Calu3 (cell line): ENCODE measurements at regions of chr1 and their contacts with region 1.

Region 1: DNA sequence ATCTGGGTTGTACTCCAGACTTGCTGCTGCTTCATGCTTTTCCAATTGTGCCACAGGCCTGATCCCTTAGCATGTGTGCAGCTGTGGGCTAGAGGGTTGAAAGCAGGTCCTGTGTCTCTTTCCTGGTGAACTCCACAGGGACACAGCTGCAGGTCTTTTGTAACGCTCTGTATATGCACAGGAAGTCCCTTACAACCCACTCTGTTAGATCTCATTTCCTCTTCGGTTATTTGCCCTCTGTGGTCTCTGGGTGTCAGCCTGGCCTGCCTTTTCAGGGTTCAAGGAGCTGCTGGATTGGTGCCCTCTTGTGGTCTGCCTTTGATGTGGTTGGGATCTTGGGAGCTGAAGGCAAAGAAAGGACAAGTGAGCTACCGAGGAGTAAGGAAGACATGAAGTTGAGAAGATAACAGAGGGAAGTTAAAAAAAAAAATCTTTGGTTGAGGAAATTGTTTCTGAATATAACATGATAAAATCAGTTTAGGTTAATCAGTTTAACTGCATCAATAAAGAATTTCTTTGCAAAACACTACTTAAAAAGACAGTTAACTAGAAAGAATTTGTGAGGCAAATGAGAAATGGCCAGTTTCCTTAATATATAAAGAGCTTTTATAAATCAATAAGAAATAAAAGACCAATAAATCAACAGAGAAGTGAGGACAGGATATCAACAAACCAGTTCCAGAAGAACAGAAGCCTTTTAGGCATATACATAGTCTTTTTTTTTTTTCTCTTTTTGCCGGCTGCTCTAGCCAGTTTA is 44.1 kb downstream of the UCK2 start:
- DNase-seq: peak; percentile 67
- H3K4me3 Mint-ChIP-seq: peak overlapping the region; percentile 7
- H3K27ac Mint-ChIP-seq: peak overlapping the region; percentile 27
- H3K4me1 Mint-ChIP-seq: peaks cover 71% of the 10 kb centered on the region
- H3K27me3 Mint-ChIP-seq: no peaks in the 10 kb centered on the region
- CTCF ChIP-seq: peak; percentile 21

Region 2: DNA sequence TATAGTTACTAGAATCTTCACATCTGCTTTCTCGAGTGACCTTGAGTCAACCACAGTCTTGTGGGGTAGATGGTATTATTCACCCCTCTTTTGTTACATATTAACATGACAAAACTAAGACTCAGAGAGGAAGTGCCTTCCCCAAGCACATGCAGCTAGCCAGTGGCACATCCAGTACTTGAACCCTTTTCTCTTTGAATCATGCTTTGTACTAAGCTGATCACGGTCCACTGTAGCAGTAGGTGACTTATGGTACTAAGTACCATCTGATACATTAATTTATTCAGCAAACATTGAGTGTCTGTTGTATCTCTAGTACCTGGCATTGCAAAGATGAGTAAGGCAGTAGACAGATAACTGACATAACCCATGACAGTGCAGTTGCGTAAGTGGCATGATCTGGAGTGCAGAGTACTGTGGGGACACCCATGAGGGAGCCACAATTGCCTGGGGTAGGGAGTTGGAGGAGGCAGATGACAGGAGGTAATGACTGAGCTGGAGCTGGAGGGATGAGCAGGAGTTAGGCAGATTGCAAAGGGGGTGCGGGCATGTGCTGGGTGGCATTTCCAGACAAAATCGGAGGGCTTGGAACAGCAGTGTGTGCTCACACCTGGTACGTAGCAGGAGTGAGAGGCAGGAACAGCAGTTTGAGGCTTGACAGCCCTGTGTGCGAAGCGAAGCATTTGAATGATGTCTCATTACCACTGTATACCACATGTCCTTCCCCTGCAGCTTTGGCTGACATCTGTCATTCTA is 14.3 kb before region 1 on chr1:
- CTCF ChIA-PET with region 1: interaction called, 4 read pairs
- intact Hi-C with region 1: loop called (anchors 2 kb)
- DNase-seq: no peak
- H3K4me3 Mint-ChIP-seq: peak overlapping the region; percentile 21
- H3K27ac Mint-ChIP-seq: peak overlapping the region; percentile 62
- H3K4me1 Mint-ChIP-seq: peaks cover 80% of the 10 kb centered on the region
- H3K27me3 Mint-ChIP-seq: no peaks in the 10 kb centered on the region
- CTCF ChIP-seq: no peak

Region 3: DNA sequence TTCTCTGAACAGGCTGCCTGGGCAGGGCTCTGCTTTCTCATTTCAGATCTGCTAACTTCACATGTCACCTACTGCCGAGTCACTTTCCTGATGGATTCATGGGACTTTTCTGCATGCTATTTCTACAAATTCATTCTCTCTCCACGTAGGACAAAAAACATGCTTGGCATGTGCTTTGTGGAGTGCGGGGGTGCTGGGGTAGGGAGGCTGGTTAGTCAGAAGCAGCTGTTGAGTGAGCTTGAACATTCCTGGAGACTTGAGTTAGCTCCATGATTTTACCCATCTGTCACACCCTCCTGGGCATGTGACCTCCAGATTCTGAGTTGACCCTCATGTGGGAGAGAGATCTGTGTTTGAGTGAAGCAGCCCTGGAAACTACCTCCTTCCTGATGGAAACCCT is 27.3 kb after region 1 on chr1:
- CTCF ChIA-PET with region 1: no interaction called
- intact Hi-C with region 1: no loop called
- DNase-seq: no peak
- H3K4me3 Mint-ChIP-seq: no peak overlapping the region
- H3K27ac Mint-ChIP-seq: no peak overlapping the region
- H3K4me1 Mint-ChIP-seq: peaks cover 42% of the 10 kb centered on the region
- H3K27me3 Mint-ChIP-seq: no peaks in the 10 kb centered on the region
- CTCF ChIP-seq: no peak